CD4-positive, alpha-beta memory T cell (primary cell): ENCODE measurements at regions of chr2 and their contacts with region 1.

Region 1: GRCh38 chr2:161160226-161161069 is at the start of gene TANK:
- DNase-seq: peak; percentile 89 to 94 (median 91)
- H3K4me3 ChIP-seq: peak within 1 kb of the TSS; percentile 86 to 90
- H3K4me3 Mint-ChIP-seq: peak within 1 kb of the TSS; percentile 96 to 100 (median 98)
- H3K27ac ChIP-seq: peak within 1 kb of the TSS; percentile 95
- H3K27ac Mint-ChIP-seq: peak within 1 kb of the TSS; percentile 94 to 99 (median 98)
- H3K4me1 ChIP-seq: peaks cover 54% of the 10 kb centered on the region
- H3K4me1 Mint-ChIP-seq: peaks cover 37 to 84% (median 61%) of the 10 kb centered on the region in 4 donors
- H3K27me3 ChIP-seq: no peaks in the 10 kb centered on the region
- H3K27me3 Mint-ChIP-seq: no peaks in the 10 kb centered on the region
- total RNA-seq, gene TANK: 90.2 to 91.2 TPM

Region 2: DNA sequence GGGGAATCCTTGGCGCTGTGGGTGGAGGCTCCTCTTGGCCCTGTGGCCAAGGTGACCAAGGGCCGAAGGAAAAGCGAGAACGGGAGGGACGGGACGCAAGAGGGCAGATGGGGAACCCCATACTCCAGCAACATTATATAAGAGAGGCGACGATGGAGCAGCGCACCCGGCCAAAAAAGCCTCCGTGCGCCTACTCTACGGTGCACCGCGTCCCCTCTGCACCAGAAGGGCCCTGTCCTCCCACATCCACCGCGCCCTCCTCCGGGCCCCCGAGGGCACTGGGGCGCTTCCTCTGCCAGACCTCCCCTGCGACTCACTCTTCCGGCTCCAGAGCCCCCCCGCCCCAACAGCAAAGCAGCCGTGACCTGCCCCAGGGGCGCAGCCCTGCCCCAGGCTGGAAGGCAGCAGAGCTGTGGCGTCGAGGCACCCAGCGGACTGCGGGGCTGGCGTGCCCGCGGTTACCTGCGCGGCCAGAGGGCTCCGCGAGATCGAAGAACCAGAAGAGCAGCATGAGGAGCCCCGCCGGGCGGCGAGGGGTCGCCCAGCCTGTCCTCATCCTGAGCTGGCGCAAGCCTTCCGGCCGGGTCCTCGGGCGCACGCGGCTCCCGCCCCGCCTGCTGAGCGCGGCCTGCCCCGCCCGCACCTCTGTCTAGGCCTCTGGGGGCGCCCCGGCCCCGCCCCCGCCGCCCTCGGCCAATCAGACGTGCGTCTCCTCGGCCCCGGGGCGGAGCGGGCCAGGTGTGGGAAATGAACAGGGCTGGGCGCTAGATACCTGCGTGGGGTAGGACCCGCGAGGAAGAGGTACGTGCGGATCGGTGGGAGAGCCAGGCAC is 1256.1 kb before region 1 on chr2:
- CTCF ChIA-PET with region 1: no interaction called
- POLR2A ChIA-PET with region 1: no interaction called
- intact Hi-C with region 1: loop called (anchors 5 kb)
- DNase-seq: peak; percentile 79 to 85 (median 82)
- H3K4me3 ChIP-seq: peak within 1 kb of the TSS; percentile 92 to 97
- H3K4me3 Mint-ChIP-seq: peak within 1 kb of the TSS; percentile 98 to 100 (median 99)
- H3K27ac ChIP-seq: peak within 1 kb of the TSS; percentile 82
- H3K27ac Mint-ChIP-seq: peak within 1 kb of the TSS; percentile 97 to 100 (median 98)
- H3K4me1 ChIP-seq: peaks cover 21% of the 10 kb centered on the region
- H3K4me1 Mint-ChIP-seq: peaks cover 18 to 43% (median 30%) of the 10 kb centered on the region in 4 donors
- H3K27me3 ChIP-seq: no peaks in the 10 kb centered on the region
- H3K27me3 Mint-ChIP-seq: no peaks in the 10 kb centered on the region

Region 3: DNA sequence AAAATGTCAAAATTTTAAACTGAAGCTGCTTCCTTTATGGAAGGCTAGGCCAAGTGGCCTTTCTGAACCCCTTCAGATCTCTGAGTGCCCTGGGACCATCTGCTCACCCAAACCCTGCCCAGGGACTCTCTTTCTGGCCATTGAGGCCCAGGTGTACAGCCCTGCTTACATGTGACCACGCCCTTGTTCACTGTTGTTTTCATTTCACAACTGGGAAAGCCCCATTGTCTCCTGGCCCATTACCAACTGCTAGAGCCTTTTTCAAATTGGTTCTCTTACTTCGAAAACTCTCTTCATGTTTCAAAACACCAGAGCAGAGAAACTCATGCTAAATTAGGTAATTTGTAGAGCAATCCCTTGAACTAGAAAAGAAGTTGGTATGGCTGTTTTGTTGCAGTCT is 219.7 kb before region 1 on chr2:
- CTCF ChIA-PET with region 1: no interaction called
- POLR2A ChIA-PET with region 1: no interaction called
- intact Hi-C with region 1: no loop called
- DNase-seq: peak; percentile 12 to 39 (median 17)
- H3K4me3 ChIP-seq: no peak overlapping the region
- H3K4me3 Mint-ChIP-seq: peak overlapping the region in 5 of 8 donors; percentile 0 to 47 (median 37)
- H3K27ac ChIP-seq: no peak overlapping the region
- H3K27ac Mint-ChIP-seq: peak overlapping the region; percentile 60 to 95 (median 76)
- H3K4me1 ChIP-seq: peaks cover 16% of the 10 kb centered on the region
- H3K4me1 Mint-ChIP-seq: peaks cover 18 to 27% (median 23%) of the 10 kb centered on the region in 4 donors
- H3K27me3 ChIP-seq: no peaks in the 10 kb centered on the region
- H3K27me3 Mint-ChIP-seq: peaks cover 1 to 8% of the 10 kb centered on the region in 2 donors

Region 4: GRCh38 chr2:161077367-161078210 is 82.9 kb before region 1 on chr2:
- CTCF ChIA-PET with region 1: no interaction called
- POLR2A ChIA-PET with region 1: interaction called, 3 read pairs
- intact Hi-C with region 1: loop called (anchors 1 kb)
- DNase-seq: peak; percentile 69 to 86 (median 76)
- H3K4me3 ChIP-seq: peak overlapping the region in 1 of 2 donors; percentile 16
- H3K4me3 Mint-ChIP-seq: peak overlapping the region; percentile 3 to 72 (median 64)
- H3K27ac ChIP-seq: peak overlapping the region; percentile 6
- H3K27ac Mint-ChIP-seq: peak overlapping the region; percentile 55 to 90 (median 84)
- H3K4me1 ChIP-seq: peaks cover 31% of the 10 kb centered on the region
- H3K4me1 Mint-ChIP-seq: peaks cover 23 to 42% (median 29%) of the 10 kb centered on the region in 4 donors
- H3K27me3 ChIP-seq: no peaks in the 10 kb centered on the region
- H3K27me3 Mint-ChIP-seq: no peaks in the 10 kb centered on the region

Region 5: GRCh38 chr2:161136696-161137324 is 23.6 kb before region 1 on chr2:
- CTCF ChIA-PET with region 1: interaction called, 6 read pairs
- POLR2A ChIA-PET with region 1: interaction called, 22 read pairs
- intact Hi-C with region 1: loop called (anchors 1 kb)
- DNase-seq: peak; percentile 70 to 82 (median 74)
- H3K4me3 ChIP-seq: peak overlapping the region; percentile 48 to 90
- H3K4me3 Mint-ChIP-seq: peak overlapping the region; percentile 90 to 99 (median 95)
- H3K27ac ChIP-seq: peak overlapping the region; percentile 97
- H3K27ac Mint-ChIP-seq: peak overlapping the region; percentile 97 to 99 (median 99)
- H3K4me1 ChIP-seq: peaks cover 40% of the 10 kb centered on the region
- H3K4me1 Mint-ChIP-seq: peaks cover 34 to 55% (median 39%) of the 10 kb centered on the region in 4 donors
- H3K27me3 ChIP-seq: no peaks in the 10 kb centered on the region
- H3K27me3 Mint-ChIP-seq: no peaks in the 10 kb centered on the region

Region 6: DNA sequence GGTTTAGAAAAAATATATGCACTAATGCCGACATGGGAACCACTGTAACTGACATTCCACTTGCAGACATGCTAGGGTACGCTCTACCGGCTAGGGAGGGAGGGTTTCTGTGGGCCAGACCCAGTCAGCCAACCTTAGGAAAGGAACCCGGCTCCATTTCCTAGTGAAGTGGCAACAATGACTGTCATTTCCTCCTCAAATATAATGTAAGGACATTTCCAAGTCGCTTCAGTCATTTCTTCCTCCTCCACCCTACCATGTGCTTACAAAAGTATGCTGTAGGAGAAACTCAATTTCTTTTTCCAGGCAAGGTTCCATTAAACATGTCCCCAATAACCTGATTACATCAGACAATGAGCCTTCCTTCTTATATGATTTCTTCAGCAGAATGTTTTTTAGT is 83.5 kb after region 1 on chr2:
- CTCF ChIA-PET with region 1: no interaction called
- POLR2A ChIA-PET with region 1: interaction called, 7 read pairs
- intact Hi-C with region 1: loop called (anchors 2 kb)
- DNase-seq: peak in 2 of 5 donors; percentile 11 to 44
- H3K4me3 ChIP-seq: peak overlapping the region; percentile 33 to 36
- H3K4me3 Mint-ChIP-seq: peak overlapping the region; percentile 84 to 96 (median 90)
- H3K27ac ChIP-seq: peak overlapping the region; percentile 78
- H3K27ac Mint-ChIP-seq: peak overlapping the region; percentile 84 to 98 (median 96)
- H3K4me1 ChIP-seq: peaks cover 46% of the 10 kb centered on the region
- H3K4me1 Mint-ChIP-seq: peaks cover 39 to 73% (median 61%) of the 10 kb centered on the region in 4 donors
- H3K27me3 ChIP-seq: no peaks in the 10 kb centered on the region
- H3K27me3 Mint-ChIP-seq: no peaks in the 10 kb centered on the region